Activated naive CD4-positive, alpha-beta T cell treated with anti-CD3 and anti-CD28 coated beads, Interleukin-2, amount 10 ng/mL, durations not matched to agents 7 days and 5 days (primary cell): ENCODE measurements at regions of chr10 and their contacts with region 1.

Region 1: DNA sequence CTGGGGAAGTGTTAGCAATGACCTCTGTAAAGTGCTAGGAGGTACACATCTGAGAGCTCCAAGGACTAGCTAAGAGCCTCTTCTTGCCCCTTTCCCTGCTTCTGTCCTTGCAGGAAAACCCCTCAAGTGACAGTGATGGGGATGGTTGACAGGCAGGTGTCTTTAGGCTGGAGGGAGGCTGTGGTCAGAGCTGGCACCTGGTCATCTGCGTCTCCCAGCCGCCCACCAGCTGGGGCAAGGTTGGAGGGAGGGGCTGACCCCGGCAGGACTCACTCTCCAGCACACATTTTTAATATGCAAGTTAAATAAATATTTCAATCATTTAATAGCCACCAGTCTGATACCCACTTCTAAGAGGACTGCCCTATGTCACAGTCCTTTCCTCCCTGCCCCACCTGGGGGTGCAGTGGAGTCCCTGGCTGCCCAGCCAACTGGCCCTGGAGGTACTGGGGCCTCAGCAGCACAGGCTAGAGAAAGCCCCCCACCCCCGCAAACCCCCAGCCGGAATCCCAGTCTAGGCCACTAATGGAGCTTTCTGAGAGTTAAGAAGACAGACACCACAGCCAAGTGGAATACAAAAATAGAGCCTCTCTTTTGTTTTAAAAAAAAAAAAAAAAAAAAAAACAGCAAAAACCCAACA is 6.3 kb downstream of the FGF8 start:
- DNase-seq: no peak
- H3K4me3 Mint-ChIP-seq: no peak overlapping the region
- H3K27ac Mint-ChIP-seq: no peak overlapping the region
- H3K4me1 Mint-ChIP-seq: peaks cover 6% of the 10 kb centered on the region
- H3K27me3 Mint-ChIP-seq: peaks cover 100% of the 10 kb centered on the region

Region 2: GRCh38 chr10:101782811-101783735 is 13.4 kb after region 1 on chr10 and contains the start of gene NPM3:
- CTCF ChIA-PET with region 1: interaction called, 26 read pairs
- DNase-seq: peak; percentile 91
- H3K4me3 Mint-ChIP-seq: peak within 1 kb of the TSS; percentile 97
- H3K27ac Mint-ChIP-seq: peak within 1 kb of the TSS; percentile 94
- H3K4me1 Mint-ChIP-seq: peaks cover 65% of the 10 kb centered on the region
- H3K27me3 Mint-ChIP-seq: peaks cover 21% of the 10 kb centered on the region